HEK293 (cell line): ENCODE measurements at regions of chr19 and their contacts with region 1.

Region 1: GRCh38 chr19:40603389-40604135 is 2.4 kb downstream of the LTBP4 start:
- H3K4me3 ChIP-seq: peak overlapping the region; percentile 35
- H3K27ac ChIP-seq: peak overlapping the region; percentile 53
- H3K4me1 ChIP-seq: peaks cover 52% of the 10 kb centered on the region
- CTCF ChIP-seq: peak; percentile 58; the same call in 1 of the 2 replicates

Region 2: GRCh38 chr19:40444192-40445028 is 159.2 kb before region 1 on chr19 and contains the start of gene SERTAD3:
- CTCF ChIA-PET with region 1: interaction called, 9 read pairs
- POLR2A ChIA-PET with region 1: interaction called, 15 read pairs
- H3K4me3 ChIP-seq: peak within 1 kb of the TSS; percentile 67
- H3K27ac ChIP-seq: peak within 1 kb of the TSS; percentile 99
- H3K4me1 ChIP-seq: peaks cover 14% of the 10 kb centered on the region
- CTCF ChIP-seq: peak; percentile 97

Region 3: DNA sequence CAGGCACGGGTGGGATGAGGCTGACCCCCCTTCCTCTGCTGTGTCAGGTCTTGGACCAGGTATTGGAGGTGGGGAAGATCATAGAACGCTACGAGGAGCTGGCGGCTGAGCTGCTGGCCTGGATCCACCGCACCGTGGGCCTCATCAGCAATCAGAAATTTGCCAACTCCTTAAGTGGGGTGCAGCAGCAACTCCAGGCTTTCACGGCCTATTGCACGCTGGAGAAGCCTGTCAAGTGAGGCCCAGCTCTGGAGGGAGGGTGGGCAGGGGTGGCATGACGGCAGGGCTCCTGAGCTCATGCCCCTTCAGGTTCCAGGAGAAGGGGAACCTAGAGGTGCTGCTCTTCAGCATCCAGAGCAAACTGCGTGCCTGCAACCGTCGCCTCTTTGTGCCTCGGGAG is 101.5 kb before region 1 on chr19:
- CTCF ChIA-PET with region 1: no interaction called
- POLR2A ChIA-PET with region 1: interaction called, 12 read pairs
- H3K4me3 ChIP-seq: no peak overlapping the region
- H3K27ac ChIP-seq: no peak overlapping the region
- H3K4me1 ChIP-seq: no peaks in the 10 kb centered on the region
- CTCF ChIP-seq: no peak

Region 4: GRCh38 chr19:40542202-40542859 is 61.2 kb before region 1 on chr19:
- CTCF ChIA-PET with region 1: interaction called, 82 read pairs
- POLR2A ChIA-PET with region 1: interaction called, 11 read pairs
- H3K4me3 ChIP-seq: no peak overlapping the region
- H3K27ac ChIP-seq: no peak overlapping the region
- H3K4me1 ChIP-seq: peaks cover 4% of the 10 kb centered on the region; the same call in 1 of the 2 replicates
- CTCF ChIP-seq: no peak

Region 5: GRCh38 chr19:40585241-40585982 is 18.1 kb before region 1 on chr19:
- CTCF ChIA-PET with region 1: interaction called, 12 read pairs
- POLR2A ChIA-PET with region 1: no interaction called
- H3K4me3 ChIP-seq: no peak overlapping the region
- H3K27ac ChIP-seq: no peak overlapping the region; the same call in 1 of the 2 replicates
- H3K4me1 ChIP-seq: no peaks in the 10 kb centered on the region; the same call in 1 of the 2 replicates
- CTCF ChIP-seq: no peak

Region 6: GRCh38 chr19:40633207-40633606 is 29.6 kb after region 1 on chr19:
- CTCF ChIA-PET with region 1: interaction called, 470 read pairs
- POLR2A ChIA-PET with region 1: interaction called, 15 read pairs
- H3K4me3 ChIP-seq: no peak overlapping the region
- H3K27ac ChIP-seq: no peak overlapping the region
- H3K4me1 ChIP-seq: no peaks in the 10 kb centered on the region
- CTCF ChIP-seq: no peak

Region 7: DNA sequence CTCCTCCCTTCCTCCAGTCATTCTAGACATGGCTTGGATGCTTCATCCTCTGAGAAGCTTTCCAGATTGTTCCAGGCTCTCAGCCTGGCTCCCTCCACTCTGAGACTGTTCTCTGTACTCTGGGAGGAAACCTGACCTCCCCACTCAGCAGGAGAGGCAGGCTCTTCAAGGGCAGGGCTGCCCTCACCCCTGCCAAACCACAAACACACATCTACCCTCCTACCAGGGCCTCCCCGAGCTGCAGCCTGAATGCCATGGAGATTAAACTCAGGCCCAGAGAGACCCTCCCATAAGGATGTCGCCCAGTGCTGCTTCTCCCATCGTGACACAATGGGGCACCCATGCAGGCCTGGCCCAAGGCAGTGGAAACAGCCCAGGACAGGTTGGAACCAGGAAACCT is 70.7 kb after region 1 on chr19:
- CTCF ChIA-PET with region 1: no interaction called
- POLR2A ChIA-PET with region 1: no interaction called
- H3K4me3 ChIP-seq: no peak overlapping the region
- H3K27ac ChIP-seq: peak overlapping the region; percentile 17; the same call in 1 of the 2 replicates
- H3K4me1 ChIP-seq: peaks cover 3% of the 10 kb centered on the region; the same call in 1 of the 2 replicates
- CTCF ChIP-seq: no peak